Thyroid gland (tissue), 4 donors: ENCODE measurements at regions of chr20 and their contacts with region 1.

Region 1: GRCh38 chr20:32902456-32903420 is 44.0 kb downstream of the EFCAB8 start:
- DNase-seq: peak; percentile 47 to 66
- H3K4me3 ChIP-seq: no peak overlapping the region
- H3K27ac ChIP-seq: no peak overlapping the region
- H3K4me1 ChIP-seq: no peaks in the 10 kb centered on the region
- H3K27me3 ChIP-seq: no peaks in the 10 kb centered on the region
- CTCF ChIP-seq: peak; percentile 72 to 93 (median 84)
- POLR2A ChIP-seq: no peak

Region 2: GRCh38 chr20:33092361-33092760 is 189.6 kb after region 1 on chr20:
- intact Hi-C with region 1: loop called (anchors 5 kb)
- DNase-seq: no peak
- H3K4me3 ChIP-seq: no peak overlapping the region
- H3K27ac ChIP-seq: no peak overlapping the region
- H3K4me1 ChIP-seq: no peaks in the 10 kb centered on the region
- H3K27me3 ChIP-seq: no peaks in the 10 kb centered on the region
- CTCF ChIP-seq: no peak
- POLR2A ChIP-seq: no peak

Region 3: DNA sequence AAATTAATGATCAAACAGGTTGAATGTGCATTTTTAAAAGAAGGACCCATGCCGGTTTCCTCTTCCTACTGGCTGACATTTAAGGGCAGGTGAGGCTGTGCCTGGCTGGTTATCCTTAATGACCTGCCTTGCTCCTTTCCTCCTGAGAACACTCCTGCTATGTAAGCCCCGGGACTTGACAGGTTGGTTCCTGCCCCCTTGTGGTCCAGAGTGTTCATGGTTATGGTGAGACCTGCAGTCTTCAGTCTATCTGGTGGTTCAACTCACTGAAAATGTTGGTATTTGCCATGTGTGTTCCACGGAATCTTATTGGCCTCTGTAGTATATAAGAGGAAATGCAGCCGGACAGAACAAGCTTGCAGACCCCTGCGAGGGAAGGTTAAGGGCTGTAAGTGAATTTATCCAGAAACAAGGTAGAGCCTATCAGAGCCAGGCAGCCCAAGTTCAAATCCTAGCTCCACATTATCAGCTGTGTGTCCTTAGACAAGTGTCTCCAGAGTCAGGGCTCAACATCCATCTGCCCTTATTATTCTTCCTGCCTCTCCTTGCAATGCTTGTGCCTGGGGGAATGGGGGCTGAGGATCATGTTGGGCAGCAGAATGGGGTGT is 309.2 kb after region 1 on chr20:
- intact Hi-C with region 1: loop called (anchors 5 kb)
- DNase-seq: peak; percentile 66 to 69
- H3K4me3 ChIP-seq: no peak overlapping the region
- H3K27ac ChIP-seq: no peak overlapping the region
- H3K4me1 ChIP-seq: no peaks in the 10 kb centered on the region
- H3K27me3 ChIP-seq: no peaks in the 10 kb centered on the region
- CTCF ChIP-seq: peak in 5 of 6 experiments; percentile 20 to 53 (median 48)
- POLR2A ChIP-seq: no peak

Region 4: GRCh38 chr20:33284238-33284637 is 381.5 kb after region 1 on chr20:
- intact Hi-C with region 1: no loop called
- DNase-seq: no peak
- H3K4me3 ChIP-seq: no peak overlapping the region
- H3K27ac ChIP-seq: no peak overlapping the region
- H3K4me1 ChIP-seq: peaks cover 16 to 24% of the 10 kb centered on the region in 2 donors
- H3K27me3 ChIP-seq: no peaks in the 10 kb centered on the region
- CTCF ChIP-seq: no peak
- POLR2A ChIP-seq: no peak